ENCODE measurements at regions of chr19 and their contacts with region 1.

Region 1: GRCh38 chr19:44570984-44571684 is 41.7 kb upstream of the CEACAM20 start:
- DNase-seq: peak; percentile 56
- H3K4me3 Mint-ChIP-seq: no peak overlapping the region
- H3K27ac Mint-ChIP-seq: no peak overlapping the region
- H3K4me1 Mint-ChIP-seq: no peaks in the 10 kb centered on the region
- H3K27me3 Mint-ChIP-seq: peaks cover 2% of the 10 kb centered on the region

Region 2: DNA sequence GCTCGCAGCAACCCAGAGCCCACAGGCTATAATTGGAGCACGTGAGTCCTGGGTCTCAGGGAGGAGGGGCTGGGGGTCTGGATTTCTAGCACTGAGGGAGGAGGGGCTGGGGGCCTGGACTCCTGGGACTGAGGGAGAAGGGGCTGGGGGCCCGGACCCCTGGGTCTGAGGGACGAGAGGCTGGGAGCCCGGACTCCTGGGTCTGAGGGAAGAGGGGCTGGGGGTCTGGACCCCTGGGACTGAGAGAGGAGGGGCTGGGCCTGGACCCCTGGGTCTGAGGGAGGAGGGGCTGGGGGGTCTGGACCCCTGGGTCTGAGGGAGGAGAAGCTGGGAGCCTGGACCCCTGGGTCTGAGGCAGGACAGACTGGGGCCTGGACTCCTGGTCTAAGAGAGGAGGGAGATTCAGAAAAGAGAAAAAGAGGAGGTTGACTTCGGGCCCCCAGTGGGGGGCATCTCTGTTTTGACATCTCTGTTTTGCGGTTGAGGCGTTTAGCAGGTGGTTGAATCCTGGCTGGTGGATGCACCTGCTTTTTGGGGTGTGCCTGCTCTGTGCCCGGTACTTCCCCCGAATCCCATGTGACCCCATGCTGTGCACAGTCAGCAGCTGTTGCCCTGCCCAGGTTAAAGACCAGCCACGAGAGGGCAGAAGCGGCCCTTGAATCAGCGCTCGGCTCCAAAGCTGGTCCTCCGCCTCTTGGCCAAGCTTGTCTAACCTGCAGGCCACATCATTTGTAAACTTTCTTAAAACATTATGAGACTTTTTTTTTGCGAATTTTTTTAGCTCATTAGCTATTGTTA is 83.0 kb after region 1 on chr19:
- CTCF ChIA-PET with region 1: interaction called, 21 read pairs
- POLR2A ChIA-PET with region 1: no interaction called
- DNase-seq: peak; percentile 80
- H3K4me3 Mint-ChIP-seq: no peak overlapping the region
- H3K27ac Mint-ChIP-seq: no peak overlapping the region
- H3K4me1 Mint-ChIP-seq: peaks cover 5% of the 10 kb centered on the region
- H3K27me3 Mint-ChIP-seq: no peaks in the 10 kb centered on the region

Measured in activated CD4-positive, alpha-beta memory T cell treated with anti-CD3 and anti-CD28 coated beads, Interleukin-2, amount 10 ng/mL, durations not matched to agents 7 days and 5 days (primary cell).